GM12878 (cell line): ENCODE measurements at regions of chr17 and their contacts with region 1.

Region 1: DNA sequence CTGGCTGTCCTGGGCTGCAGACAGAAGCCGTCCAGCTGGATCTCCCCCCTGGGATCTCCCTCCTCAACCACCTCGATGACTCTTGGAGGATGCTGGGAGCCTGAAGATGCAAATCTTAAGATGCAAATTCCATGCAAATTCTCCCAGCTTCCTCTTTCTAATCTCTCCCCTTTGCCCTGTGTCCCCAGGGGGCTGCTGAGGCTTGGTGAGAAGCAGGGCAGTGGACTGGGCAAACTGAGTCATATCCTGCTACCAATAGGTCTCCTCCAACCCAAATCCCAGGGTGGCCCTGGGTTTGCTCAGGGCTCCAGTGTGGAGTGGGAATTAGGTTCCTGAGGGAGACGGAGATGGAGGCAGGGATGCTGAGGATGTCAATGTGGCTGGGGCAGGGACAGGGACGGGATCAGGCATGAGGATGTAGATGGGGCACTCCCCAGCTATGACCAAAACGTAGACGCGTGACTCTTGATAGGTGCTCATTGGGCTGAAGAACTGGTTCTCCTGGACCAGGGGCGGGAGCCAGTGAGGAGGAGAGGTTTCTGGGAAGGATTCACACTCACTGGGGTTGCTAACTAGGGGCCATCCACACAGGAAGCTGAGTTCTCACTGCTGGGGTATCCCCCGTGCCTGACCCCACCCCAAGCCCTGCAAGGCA is 3.6 kb upstream of the ALOX12B start:
- DNase-seq: peak; percentile 61
- ATAC-seq: peak; percentile 90
- H3K4me3 ChIP-seq: no peak overlapping the region
- H3K27ac ChIP-seq: no peak overlapping the region
- H3K4me1 ChIP-seq: peaks cover 8% of the 10 kb centered on the region
- H3K27me3 ChIP-seq: peaks cover 0 to 4% of the 10 kb centered on the region in 2 experiments; a peak in 1 of 4 replicates
- CTCF ChIP-seq: no peak
- EP300 ChIP-seq: 0 out of 4 replicates have a peak, but pooled peaks of 1 of the 2 experiments have one; percentile 21
- POLR2A ChIP-seq: no peak
- RAD21 ChIP-seq: no peak

Region 2: DNA sequence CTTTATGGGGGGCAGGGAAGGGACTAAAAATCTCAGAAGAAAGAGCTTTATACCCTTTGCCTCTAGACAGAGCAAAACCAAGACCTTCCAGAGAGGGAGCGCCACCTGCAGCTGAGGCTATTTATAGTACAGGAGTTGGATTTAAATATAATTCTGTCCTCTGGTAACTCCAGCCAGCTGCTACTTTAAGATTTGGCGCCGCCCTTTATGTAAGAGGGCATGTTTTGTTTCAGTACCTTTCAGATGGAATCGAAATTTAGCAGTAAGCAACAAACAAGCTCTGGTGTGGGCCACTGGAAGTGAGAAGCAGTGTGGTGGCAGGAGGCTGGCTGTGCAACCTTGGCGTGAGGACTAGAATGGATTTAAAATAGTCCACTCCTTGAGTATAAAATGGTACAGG is 94.0 kb before region 1 on chr17:
- CTCF ChIA-PET with region 1: no interaction called
- POLR2A ChIA-PET with region 1: no interaction called
- RAD21 ChIA-PET with region 1: no interaction called
- SMC1A ChIA-PET with region 1: no interaction called
- in situ Hi-C with region 1: no loop called
- intact Hi-C with region 1: no loop called
- DNase-seq: no peak
- ATAC-seq: peak; percentile 73
- H3K4me3 ChIP-seq: no peak overlapping the region
- H3K27ac ChIP-seq: no peak overlapping the region
- H3K4me1 ChIP-seq: peaks cover 9% of the 10 kb centered on the region
- H3K27me3 ChIP-seq: peaks cover under 1 to 2% of the 10 kb centered on the region in 2 experiments; a peak in 3 of 4 replicates
- CTCF ChIP-seq: peak in 2 of 3 experiments; percentile 21 to 41; a peak in 3 of 6 replicates
- EP300 ChIP-seq: no peak
- POLR2A ChIP-seq: no peak
- RAD21 ChIP-seq: no peak

Region 3: GRCh38 chr17:8073627-8074484 is 17.3 kb before region 1 on chr17:
- CTCF ChIA-PET with region 1: interaction called, 76 read pairs
- POLR2A ChIA-PET with region 1: interaction called, 5 read pairs
- RAD21 ChIA-PET with region 1: interaction called, 4 read pairs
- SMC1A ChIA-PET with region 1: interaction called, 7 read pairs
- in situ Hi-C with region 1: no loop called
- intact Hi-C with region 1: no loop called
- DNase-seq: no peak
- ATAC-seq: peak; percentile 97
- H3K4me3 ChIP-seq: no peak overlapping the region
- H3K27ac ChIP-seq: no peak overlapping the region
- H3K4me1 ChIP-seq: no peaks in the 10 kb centered on the region
- H3K27me3 ChIP-seq: peaks cover 8 to 20% of the 10 kb centered on the region in 2 experiments
- CTCF ChIP-seq: peak; percentile 86 to 95 (median 93)
- EP300 ChIP-seq: no peak
- POLR2A ChIP-seq: no peak
- RAD21 ChIP-seq: no peak

Region 4: GRCh38 chr17:8079291-8080207 is 11.6 kb before region 1 on chr17:
- CTCF ChIA-PET with region 1: interaction called, 76 read pairs
- POLR2A ChIA-PET with region 1: interaction called, 5 read pairs
- RAD21 ChIA-PET with region 1: interaction called, 3 read pairs
- SMC1A ChIA-PET with region 1: interaction called, 3 read pairs
- in situ Hi-C with region 1: no loop called
- intact Hi-C with region 1: no loop called
- DNase-seq: no peak
- ATAC-seq: peak; percentile 96
- H3K4me3 ChIP-seq: peak overlapping the region; percentile 75
- H3K27ac ChIP-seq: no peak overlapping the region
- H3K4me1 ChIP-seq: peaks cover 4% of the 10 kb centered on the region; the same call in 1 of the 2 replicates
- H3K27me3 ChIP-seq: peaks cover 3% of the 10 kb centered on the region in 2 experiments; a peak in 3 of 4 replicates
- CTCF ChIP-seq: peak; percentile 78 to 91 (median 90)
- EP300 ChIP-seq: no peak
- POLR2A ChIP-seq: no peak; the same call in 1 of the 2 replicates
- RAD21 ChIP-seq: peak; percentile 57

Region 5: DNA sequence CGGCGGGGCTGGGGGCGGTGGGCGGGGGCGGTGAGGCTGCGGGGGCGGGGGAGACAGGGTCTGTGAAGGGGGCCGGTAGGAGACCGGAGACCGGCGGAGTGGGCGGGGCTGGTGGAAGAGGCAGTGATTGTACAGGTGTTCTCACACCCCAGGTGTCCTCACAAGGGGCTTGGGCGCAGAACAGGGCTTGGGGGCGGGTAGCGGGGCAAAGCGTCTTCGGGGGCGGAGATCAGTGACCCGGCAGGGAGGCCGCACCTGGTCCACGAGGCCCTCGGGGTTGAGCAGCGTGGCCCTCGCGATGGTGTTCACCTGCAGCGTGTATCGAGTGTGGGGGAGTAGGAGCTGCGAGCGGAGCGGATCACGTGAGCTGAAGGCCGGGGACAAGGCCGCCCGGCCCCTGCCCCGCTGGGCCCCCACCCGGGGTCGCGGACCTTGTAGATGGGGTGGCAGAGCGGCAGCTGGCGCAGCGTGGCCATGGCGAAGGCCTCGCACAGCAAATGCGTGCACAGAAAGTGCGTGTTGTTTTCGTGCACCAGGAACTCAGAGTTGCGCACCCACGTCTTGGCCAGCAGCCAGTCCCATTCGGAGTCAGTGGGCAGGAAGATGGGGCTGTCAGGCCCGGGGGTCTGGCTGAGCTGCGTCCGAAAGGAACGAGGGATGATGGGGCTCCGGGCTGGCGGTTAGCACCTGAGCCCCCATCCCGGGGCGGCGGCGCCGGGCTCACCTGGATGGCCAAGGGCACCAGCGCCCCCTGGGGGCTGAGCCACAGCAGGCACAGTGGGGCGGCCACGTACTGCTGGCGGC is 18.7 kb after region 1 on chr17:
- CTCF ChIA-PET with region 1: interaction called, 189 read pairs
- POLR2A ChIA-PET with region 1: interaction called, 3 read pairs
- RAD21 ChIA-PET with region 1: interaction called, 9 read pairs
- SMC1A ChIA-PET with region 1: interaction called, 9 read pairs
- in situ Hi-C with region 1: no loop called
- intact Hi-C with region 1: no loop called
- DNase-seq: no peak
- ATAC-seq: peak; percentile 99
- H3K4me3 ChIP-seq: peak overlapping the region; percentile 57; the same call in 1 of the 2 replicates
- H3K27ac ChIP-seq: no peak overlapping the region
- H3K4me1 ChIP-seq: peaks cover 4% of the 10 kb centered on the region
- H3K27me3 ChIP-seq: no peaks in the 10 kb centered on the region; a peak in 2 of 4 replicates
- CTCF ChIP-seq: peak; percentile 85 to 97 (median 94)
- EP300 ChIP-seq: no peak
- POLR2A ChIP-seq: no peak
- RAD21 ChIP-seq: peak; percentile 66

Region 6: DNA sequence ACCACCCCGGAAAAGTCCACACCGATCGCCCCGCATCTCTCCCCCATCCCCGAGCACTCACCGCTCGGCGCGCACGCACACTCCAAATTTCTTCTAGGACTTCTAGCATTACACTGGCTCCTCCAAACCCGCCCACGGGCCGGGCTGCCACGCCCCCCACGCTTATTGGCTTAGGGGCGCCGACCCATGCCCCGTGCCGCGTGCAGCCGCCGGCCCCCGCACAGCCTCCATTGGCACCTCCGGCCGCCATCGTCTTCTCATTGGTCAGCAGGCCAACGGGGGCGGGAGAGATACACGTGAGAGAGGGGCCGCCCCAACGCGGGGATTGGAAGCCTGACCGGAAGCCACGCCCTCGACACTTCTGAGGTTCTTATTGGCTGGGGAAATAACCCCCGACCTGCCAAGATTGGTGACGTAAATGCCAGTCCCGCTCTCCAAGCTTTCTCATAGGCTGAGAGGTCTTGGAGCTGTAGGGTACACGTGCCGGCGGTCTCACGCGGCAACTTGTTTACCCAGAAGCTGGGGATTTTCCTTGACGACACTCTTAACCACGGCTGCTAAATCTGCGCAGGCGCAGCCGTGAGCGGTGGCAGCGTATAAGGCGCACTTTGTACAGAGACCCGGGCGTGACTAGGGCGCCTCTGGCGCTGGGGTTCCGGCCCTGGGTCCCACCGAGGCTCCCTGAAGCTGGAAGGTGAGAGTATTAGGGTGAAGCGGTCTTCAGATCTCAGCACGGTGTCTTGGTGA is 65.3 kb after region 1 on chr17:
- CTCF ChIA-PET with region 1: interaction called, 13 read pairs
- POLR2A ChIA-PET with region 1: interaction called, 4 read pairs
- RAD21 ChIA-PET with region 1: interaction called, 3 read pairs
- SMC1A ChIA-PET with region 1: interaction called, 3 read pairs
- in situ Hi-C with region 1: no loop called
- intact Hi-C with region 1: no loop called
- DNase-seq: peak; percentile 100
- ATAC-seq: peak; percentile 83
- H3K4me3 ChIP-seq: peak overlapping the region; percentile 86
- H3K27ac ChIP-seq: peak overlapping the region; percentile 94
- H3K4me1 ChIP-seq: peaks cover 21% of the 10 kb centered on the region
- H3K27me3 ChIP-seq: no peaks in the 10 kb centered on the region
- CTCF ChIP-seq: peak in 1 of 3 experiments; percentile 23; a peak in 1 of 6 replicates
- EP300 ChIP-seq: peak; percentile 0 to 53; a peak in 3 of 4 replicates
- POLR2A ChIP-seq: peak; percentile 87
- RAD21 ChIP-seq: no peak